Naive thymus-derived CD4-positive, alpha-beta T cell (primary cell): ENCODE measurements at regions of chr15 and their contacts with region 1.

Region 1: GRCh38 chr15:78149068-78149804 is at the start of gene IDH3A:
- DNase-seq: peak; percentile 97 to 100 (median 99)
- ATAC-seq: peak; percentile 99
- H3K4me3 ChIP-seq: peak within 1 kb of the TSS; percentile 76
- H3K4me3 Mint-ChIP-seq: peak within 1 kb of the TSS; percentile 93 to 98 (median 96)
- H3K27ac ChIP-seq: peak within 1 kb of the TSS; percentile 77
- H3K27ac Mint-ChIP-seq: peak within 1 kb of the TSS; percentile 91 to 97 (median 95)
- H3K4me1 ChIP-seq: peaks cover 17 to 24% of the 10 kb centered on the region in 2 donors
- H3K4me1 Mint-ChIP-seq: peaks cover 25 to 51% (median 43%) of the 10 kb centered on the region in 7 donors
- H3K27me3 ChIP-seq: no peaks in the 10 kb centered on the region
- H3K27me3 Mint-ChIP-seq: no peaks in the 10 kb centered on the region
- total RNA-seq, gene IDH3A: 44.4 to 105 (median 61.1) TPM

Region 2: GRCh38 chr15:78077058-78077877 is 72.0 kb before region 1 on chr15 and contains the start of gene TBC1D2B:
- CTCF ChIA-PET with region 1: no interaction called
- POLR2A ChIA-PET with region 1: no interaction called
- intact Hi-C with region 1: loop called (anchors 2 to 5 kb)
- DNase-seq: peak; percentile 51 to 79 (median 65)
- ATAC-seq: peak; percentile 90
- H3K4me3 ChIP-seq: peak within 1 kb of the TSS; percentile 98
- H3K4me3 Mint-ChIP-seq: peak within 1 kb of the TSS; percentile 92 to 100 (median 98)
- H3K27ac ChIP-seq: peak within 1 kb of the TSS; percentile 70
- H3K27ac Mint-ChIP-seq: peak within 1 kb of the TSS; percentile 88 to 98 (median 95)
- H3K4me1 ChIP-seq: peaks cover 33 to 34% of the 10 kb centered on the region in 2 donors
- H3K4me1 Mint-ChIP-seq: peaks cover 36 to 56% (median 46%) of the 10 kb centered on the region in 7 donors
- H3K27me3 ChIP-seq: no peaks in the 10 kb centered on the region
- H3K27me3 Mint-ChIP-seq: no peaks in the 10 kb centered on the region
- total RNA-seq, gene TBC1D2B: 69.7 to 119 (median 86.1) TPM

Region 3: GRCh38 chr15:78131295-78132061 is 17.8 kb before region 1 on chr15 and contains the start of gene CIB2:
- CTCF ChIA-PET with region 1: interaction called, 4 read pairs
- POLR2A ChIA-PET with region 1: interaction called, 9 read pairs
- intact Hi-C with region 1: loop called (anchors 1 kb)
- DNase-seq: peak; percentile 67 to 90 (median 78)
- ATAC-seq: peak; percentile 90
- H3K4me3 ChIP-seq: peak within 1 kb of the TSS; percentile 74
- H3K4me3 Mint-ChIP-seq: peak within 1 kb of the TSS; percentile 80 to 89 (median 84)
- H3K27ac ChIP-seq: peak within 1 kb of the TSS; percentile 86
- H3K27ac Mint-ChIP-seq: peak within 1 kb of the TSS; percentile 68 to 93 (median 89)
- H3K4me1 ChIP-seq: peaks cover 10 to 11% of the 10 kb centered on the region in 2 donors
- H3K4me1 Mint-ChIP-seq: peaks cover 10 to 37% (median 21%) of the 10 kb centered on the region in 7 donors
- H3K27me3 ChIP-seq: no peaks in the 10 kb centered on the region
- H3K27me3 Mint-ChIP-seq: peaks cover 0 to 2% (median 0%) of the 10 kb centered on the region in 5 donors
- total RNA-seq, gene CIB2: 1.0 to 2.0 (median 1.7) TPM

Region 4: GRCh38 chr15:78162038-78162437 is 12.8 kb after region 1 on chr15:
- CTCF ChIA-PET with region 1: no interaction called
- POLR2A ChIA-PET with region 1: interaction called, 12 read pairs
- intact Hi-C with region 1: loop called (anchors 1 to 2 kb)
- DNase-seq: peak in 7 of 9 donors; percentile 33 to 78 (median 51)
- ATAC-seq: peak; percentile 64
- H3K4me3 ChIP-seq: no peak overlapping the region
- H3K4me3 Mint-ChIP-seq: peak overlapping the region in 7 of 10 donors; percentile 10 to 62 (median 50)
- H3K27ac ChIP-seq: no peak overlapping the region
- H3K27ac Mint-ChIP-seq: peak overlapping the region in 8 of 9 donors; percentile 52 to 94 (median 86)
- H3K4me1 ChIP-seq: peaks cover 0 to under 1% of the 10 kb centered on the region in 2 donors
- H3K4me1 Mint-ChIP-seq: peaks cover 0 to 16% (median 3%) of the 10 kb centered on the region in 7 donors
- H3K27me3 ChIP-seq: no peaks in the 10 kb centered on the region
- H3K27me3 Mint-ChIP-seq: no peaks in the 10 kb centered on the region

Region 5: GRCh38 chr15:78167227-78167888 is 18.1 kb after region 1 on chr15:
- CTCF ChIA-PET with region 1: no interaction called
- POLR2A ChIA-PET with region 1: interaction called, 12 read pairs
- intact Hi-C with region 1: loop called (anchors 1 to 2 kb)
- DNase-seq: peak in 6 of 9 donors; percentile 20 to 57 (median 46)
- ATAC-seq: peak; percentile 63
- H3K4me3 ChIP-seq: no peak overlapping the region
- H3K4me3 Mint-ChIP-seq: peak overlapping the region in 8 of 10 donors; percentile 5 to 54 (median 19)
- H3K27ac ChIP-seq: no peak overlapping the region
- H3K27ac Mint-ChIP-seq: peak overlapping the region in 7 of 9 donors; percentile 3 to 63 (median 47)
- H3K4me1 ChIP-seq: peaks cover 8 to 10% of the 10 kb centered on the region in 2 donors
- H3K4me1 Mint-ChIP-seq: peaks cover 6 to 48% (median 13%) of the 10 kb centered on the region in 7 donors
- H3K27me3 ChIP-seq: no peaks in the 10 kb centered on the region
- H3K27me3 Mint-ChIP-seq: no peaks in the 10 kb centered on the region

Region 6: DNA sequence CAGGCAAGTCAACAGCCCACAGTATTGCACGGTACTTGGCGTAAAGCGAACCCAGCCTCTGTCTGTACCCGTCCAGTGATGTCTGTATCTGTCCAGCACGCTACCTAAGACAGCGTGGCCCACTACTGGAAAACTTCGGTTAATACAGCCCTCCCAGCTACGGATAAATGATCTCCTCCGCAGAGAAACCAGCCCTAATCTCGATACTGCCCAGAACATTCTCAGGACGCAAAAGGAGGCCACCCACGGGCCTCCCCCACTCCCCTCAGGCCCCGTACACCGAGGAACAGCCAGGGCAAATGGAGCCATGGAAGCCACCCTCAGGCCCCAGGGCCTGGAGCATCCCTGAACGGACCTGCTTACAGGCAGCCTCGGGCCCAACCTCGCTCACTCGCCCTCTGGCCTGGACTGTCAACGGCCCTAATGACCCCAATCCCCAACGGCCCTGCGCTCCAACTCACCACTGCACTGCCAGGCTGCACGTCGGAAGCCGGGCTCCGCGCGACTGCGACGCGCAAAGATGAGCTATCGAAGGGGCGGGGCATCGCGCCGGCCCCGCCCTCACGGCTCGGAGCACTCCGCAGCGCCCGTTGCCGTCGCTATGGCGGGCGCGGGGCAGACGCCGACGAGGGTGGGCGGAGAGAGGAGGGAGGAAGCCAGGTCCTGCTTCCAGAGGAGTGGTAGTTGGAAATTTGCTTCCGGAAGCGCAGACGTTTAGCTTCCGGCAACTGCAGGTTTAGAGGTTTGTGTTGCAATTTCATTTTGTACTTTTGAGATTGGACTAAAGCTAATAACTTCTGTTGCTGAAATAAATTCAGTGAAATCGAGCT is 150.1 kb after region 1 on chr15 and contains the start of gene SKIC8:
- CTCF ChIA-PET with region 1: no interaction called
- POLR2A ChIA-PET with region 1: no interaction called
- intact Hi-C with region 1: loop called (anchors 1 kb)
- DNase-seq: peak; percentile 84 to 92 (median 91)
- ATAC-seq: peak; percentile 99
- H3K4me3 ChIP-seq: peak within 1 kb of the TSS; percentile 88
- H3K4me3 Mint-ChIP-seq: peak within 1 kb of the TSS; percentile 94 to 99 (median 97)
- H3K27ac ChIP-seq: peak within 1 kb of the TSS; percentile 80
- H3K27ac Mint-ChIP-seq: peak within 1 kb of the TSS; percentile 89 to 97 (median 94)
- H3K4me1 ChIP-seq: peaks cover 8 to 15% of the 10 kb centered on the region in 2 donors
- H3K4me1 Mint-ChIP-seq: peaks cover 12 to 41% (median 31%) of the 10 kb centered on the region in 7 donors
- H3K27me3 ChIP-seq: no peaks in the 10 kb centered on the region
- H3K27me3 Mint-ChIP-seq: no peaks in the 10 kb centered on the region
- total RNA-seq, gene SKIC8: 26.7 to 48.7 (median 43.6) TPM

Region 7: GRCh38 chr15:78422571-78423340 is 273.5 kb after region 1 on chr15:
- CTCF ChIA-PET with region 1: no interaction called
- POLR2A ChIA-PET with region 1: no interaction called
- intact Hi-C with region 1: no loop called
- DNase-seq: peak; percentile 34 to 62 (median 54)
- ATAC-seq: peak; percentile 94
- H3K4me3 ChIP-seq: no peak overlapping the region
- H3K4me3 Mint-ChIP-seq: no peak overlapping the region
- H3K27ac ChIP-seq: no peak overlapping the region
- H3K27ac Mint-ChIP-seq: no peak overlapping the region
- H3K4me1 ChIP-seq: no peaks in the 10 kb centered on the region
- H3K4me1 Mint-ChIP-seq: peaks cover 9 to 19% (median 15%) of the 10 kb centered on the region in 7 donors
- H3K27me3 ChIP-seq: peaks cover 0 to 4% of the 10 kb centered on the region in 2 donors
- H3K27me3 Mint-ChIP-seq: peaks cover 5 to 17% (median 11%) of the 10 kb centered on the region in 5 donors

Region 8: DNA sequence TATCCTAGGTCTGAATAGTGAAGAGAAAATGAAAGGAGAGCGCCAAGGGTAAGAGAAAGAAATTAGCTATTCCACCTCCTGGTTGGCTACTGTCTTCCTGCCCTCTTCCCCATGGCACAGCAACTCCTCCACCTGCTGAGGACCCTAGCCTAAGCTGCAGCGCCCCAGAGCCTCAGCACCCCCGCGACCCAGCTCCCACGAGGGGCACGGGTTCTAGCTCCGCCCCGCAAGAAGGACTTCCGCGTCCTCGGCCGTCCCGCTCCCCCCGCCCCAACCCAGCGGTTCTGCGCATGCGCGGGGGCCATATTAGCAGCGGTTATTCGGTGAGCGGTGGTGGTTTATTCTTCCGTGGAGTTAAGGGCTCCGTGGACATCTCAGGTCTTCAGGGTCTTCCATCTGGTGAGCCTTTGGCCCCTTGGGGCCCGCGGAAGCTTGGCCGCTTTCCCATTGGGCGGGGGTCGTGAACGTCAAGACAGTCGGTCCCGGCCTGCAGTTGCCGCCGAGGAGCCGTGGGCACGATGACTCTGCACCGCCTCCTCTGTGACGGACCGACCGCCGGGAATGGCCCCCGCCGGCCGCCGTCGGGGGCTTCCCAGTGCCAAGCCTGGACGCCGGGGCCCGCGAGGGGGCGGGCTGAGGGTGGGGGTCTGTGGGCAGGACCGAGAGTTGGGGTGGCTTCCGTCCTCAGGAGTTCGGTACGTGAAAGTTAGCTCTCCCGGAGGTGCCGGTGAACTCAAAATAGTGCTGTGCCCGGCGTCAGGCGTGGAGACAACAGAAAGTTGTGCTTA is 391.1 kb after region 1 on chr15 and contains the start of gene PSMA4:
- CTCF ChIA-PET with region 1: no interaction called
- POLR2A ChIA-PET with region 1: no interaction called
- intact Hi-C with region 1: loop called in 1 of 2 experiments (anchors 2 kb)
- DNase-seq: peak; percentile 89 to 97 (median 95)
- ATAC-seq: peak; percentile 93
- H3K4me3 ChIP-seq: peak within 1 kb of the TSS; percentile 89
- H3K4me3 Mint-ChIP-seq: peak within 1 kb of the TSS; percentile 86 to 99 (median 92)
- H3K27ac ChIP-seq: peak within 1 kb of the TSS; percentile 99
- H3K27ac Mint-ChIP-seq: peak within 1 kb of the TSS; percentile 91 to 100 (median 99)
- H3K4me1 ChIP-seq: peaks cover 19 to 23% of the 10 kb centered on the region in 2 donors
- H3K4me1 Mint-ChIP-seq: peaks cover 18 to 47% (median 35%) of the 10 kb centered on the region in 7 donors
- H3K27me3 ChIP-seq: no peaks in the 10 kb centered on the region
- H3K27me3 Mint-ChIP-seq: peaks cover 0 to 4% (median 0%) of the 10 kb centered on the region in 5 donors
- total RNA-seq, gene PSMA4: 69.6 to 284 (median 79.9) TPM